ENCODE measurements at regions of chr10 and their contacts with region 1.

Region 1: GRCh38 chr10:51729822-51730555 is 30.6 kb upstream of the CSTF2T start:
- DNase-seq: no peak
- H3K4me3 ChIP-seq: no peak overlapping the region
- H3K27ac ChIP-seq: no peak overlapping the region
- H3K4me1 ChIP-seq: no peaks in the 10 kb centered on the region
- H3K27me3 ChIP-seq: no peaks in the 10 kb centered on the region
- CTCF ChIP-seq: no peak
- POLR2A ChIP-seq: no peak

Region 2: GRCh38 chr10:51389415-51390321 is 340.3 kb before region 1 on chr10:
- intact Hi-C with region 1: loop called (anchors 10 kb)
- DNase-seq: no peak
- H3K4me3 ChIP-seq: no peak overlapping the region
- H3K27ac ChIP-seq: no peak overlapping the region
- H3K4me1 ChIP-seq: no peaks in the 10 kb centered on the region
- H3K27me3 ChIP-seq: no peaks in the 10 kb centered on the region
- CTCF ChIP-seq: peak in 1 of 3 donors; percentile 56
- POLR2A ChIP-seq: no peak

Region 3: GRCh38 chr10:51574248-51575048 is 155.5 kb before region 1 on chr10:
- intact Hi-C with region 1: no loop called
- DNase-seq: no peak
- H3K4me3 ChIP-seq: no peak overlapping the region
- H3K27ac ChIP-seq: no peak overlapping the region
- H3K4me1 ChIP-seq: no peaks in the 10 kb centered on the region
- H3K27me3 ChIP-seq: no peaks in the 10 kb centered on the region
- CTCF ChIP-seq: no peak
- POLR2A ChIP-seq: no peak

Measured in breast epithelium (tissue), 4 donors.